ENCODE measurements at regions of chr10 and their contacts with region 1.

Region 1: GRCh38 chr10:92689663-92690210 is at the start of gene HHEX:
- DNase-seq: peak; percentile 88
- ATAC-seq: peak; percentile 76
- H3K4me3 ChIP-seq: peak within 1 kb of the TSS; percentile 82 to 95 (median 87)
- H3K4me3 Mint-ChIP-seq: peak within 1 kb of the TSS; percentile 96
- H3K27ac ChIP-seq: peak within 1 kb of the TSS; percentile 89 to 90
- H3K27ac Mint-ChIP-seq: peak within 1 kb of the TSS; percentile 98
- H3K4me1 ChIP-seq: peaks cover 28% of the 10 kb centered on the region in 2 donors
- H3K4me1 Mint-ChIP-seq: peaks cover 52% of the 10 kb centered on the region
- H3K27me3 ChIP-seq: no peaks in the 10 kb centered on the region
- H3K27me3 Mint-ChIP-seq: no peaks in the 10 kb centered on the region
- CTCF ChIP-seq: no peak
- total RNA-seq, gene HHEX: 149 and 155 TPM in 2 replicates

Region 2: DNA sequence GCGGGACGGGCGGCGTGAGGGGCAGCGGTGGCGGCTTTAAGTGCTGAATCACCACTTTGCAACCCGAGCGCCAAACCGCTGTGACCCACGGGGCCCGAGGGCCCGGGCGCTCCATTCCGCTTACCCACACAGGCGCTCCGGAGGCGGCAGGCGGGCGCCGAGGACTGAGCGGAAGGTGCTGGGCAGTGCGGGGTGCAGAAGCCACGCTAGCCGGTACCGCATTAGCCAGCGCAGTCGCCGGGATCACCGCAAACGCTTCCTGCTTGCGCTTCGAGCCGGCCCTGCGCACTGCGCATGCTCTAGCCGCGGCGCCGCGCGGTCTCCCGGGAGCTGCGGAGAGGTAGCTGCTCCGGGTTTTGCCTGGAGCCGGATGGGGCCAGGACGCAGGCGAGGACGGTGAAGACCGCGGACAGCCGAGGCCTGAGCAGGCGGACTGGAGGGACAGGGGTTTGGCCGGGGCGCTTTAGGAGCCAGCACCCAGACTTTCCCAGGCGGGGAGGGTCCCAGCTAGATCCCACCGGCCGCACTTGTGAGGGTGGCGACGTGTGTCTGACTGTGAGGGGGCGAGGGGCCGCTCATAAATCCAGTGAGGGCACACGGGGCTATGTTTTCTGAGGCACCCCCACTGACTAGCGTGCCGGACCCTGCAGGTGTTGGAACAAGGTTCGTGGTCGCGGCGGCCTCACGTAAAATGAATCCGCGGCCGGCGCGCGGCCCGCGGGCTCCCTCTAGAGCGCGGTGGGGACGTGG is 115.8 kb before region 1 on chr10 and contains the start of gene IDE:
- CTCF ChIA-PET with region 1: interaction called, 3 read pairs
- POLR2A ChIA-PET with region 1: interaction called, 6 read pairs
- intact Hi-C with region 1: loop called (anchors 1 kb)
- DNase-seq: peak; percentile 89
- ATAC-seq: peak; percentile 80
- H3K4me3 ChIP-seq: peak within 1 kb of the TSS; percentile 50 to 94 (median 90)
- H3K4me3 Mint-ChIP-seq: peak within 1 kb of the TSS; percentile 91
- H3K27ac ChIP-seq: peak within 1 kb of the TSS; percentile 70 to 80
- H3K27ac Mint-ChIP-seq: peak within 1 kb of the TSS; percentile 87
- H3K4me1 ChIP-seq: peaks cover 16 to 20% of the 10 kb centered on the region in 2 donors
- H3K4me1 Mint-ChIP-seq: peaks cover 35% of the 10 kb centered on the region
- H3K27me3 ChIP-seq: no peaks in the 10 kb centered on the region
- H3K27me3 Mint-ChIP-seq: no peaks in the 10 kb centered on the region
- CTCF ChIP-seq: peak; percentile 86
- total RNA-seq, gene IDE: 38.5 and 40.9 TPM in 2 replicates

Region 3: GRCh38 chr10:92699518-92700381 is 10.0 kb after region 1 on chr10:
- CTCF ChIA-PET with region 1: interaction called, 18 read pairs
- POLR2A ChIA-PET with region 1: interaction called, 44 read pairs
- intact Hi-C with region 1: loop called (anchors 1 kb)
- DNase-seq: peak; percentile 60
- ATAC-seq: peak; percentile 71
- H3K4me3 ChIP-seq: peak overlapping the region; percentile 49 to 76 (median 62)
- H3K4me3 Mint-ChIP-seq: peak overlapping the region; percentile 82
- H3K27ac ChIP-seq: peak overlapping the region; percentile 45 to 83
- H3K27ac Mint-ChIP-seq: peak overlapping the region; percentile 84
- H3K4me1 ChIP-seq: peaks cover 47 to 58% of the 10 kb centered on the region in 2 donors
- H3K4me1 Mint-ChIP-seq: peaks cover 59% of the 10 kb centered on the region
- H3K27me3 ChIP-seq: no peaks in the 10 kb centered on the region
- H3K27me3 Mint-ChIP-seq: no peaks in the 10 kb centered on the region
- CTCF ChIP-seq: no peak

Region 4: GRCh38 chr10:92742331-92743228 is 52.8 kb after region 1 on chr10:
- CTCF ChIA-PET with region 1: interaction called, 7 read pairs
- POLR2A ChIA-PET with region 1: interaction called, 52 read pairs
- intact Hi-C with region 1: loop called (anchors 1 kb)
- DNase-seq: peak; percentile 89
- ATAC-seq: peak; percentile 93
- H3K4me3 ChIP-seq: peak overlapping the region in 3 of 5 experiments; percentile 25 to 37 (median 30)
- H3K4me3 Mint-ChIP-seq: peak overlapping the region; percentile 68
- H3K27ac ChIP-seq: peak overlapping the region; percentile 87 to 91
- H3K27ac Mint-ChIP-seq: peak overlapping the region; percentile 91
- H3K4me1 ChIP-seq: peaks cover 60 to 66% of the 10 kb centered on the region in 2 donors
- H3K4me1 Mint-ChIP-seq: peaks cover 70% of the 10 kb centered on the region
- H3K27me3 ChIP-seq: no peaks in the 10 kb centered on the region
- H3K27me3 Mint-ChIP-seq: no peaks in the 10 kb centered on the region
- CTCF ChIP-seq: no peak

Region 5: DNA sequence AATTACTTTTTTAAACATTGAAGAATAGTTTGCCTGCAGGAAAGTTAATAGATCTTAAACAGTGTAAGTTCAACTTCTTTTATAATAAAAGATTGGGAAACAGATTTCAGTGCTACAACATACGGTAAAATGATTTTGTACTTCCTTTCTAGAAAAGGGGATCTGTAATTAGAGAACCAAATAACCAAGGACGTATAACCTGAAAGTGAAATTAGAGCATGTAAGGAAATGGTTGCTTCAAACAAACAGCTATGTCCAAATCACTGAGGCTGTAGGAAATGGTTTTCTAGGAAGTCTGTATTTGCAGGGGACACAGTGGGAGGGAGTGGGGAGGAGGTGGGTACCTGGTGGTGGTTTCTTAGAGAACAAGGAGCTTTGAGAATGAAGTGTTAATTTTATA is 100.7 kb after region 1 on chr10:
- CTCF ChIA-PET with region 1: interaction called, 32 read pairs
- POLR2A ChIA-PET with region 1: interaction called, 11 read pairs
- intact Hi-C with region 1: no loop called
- DNase-seq: peak; percentile 69
- ATAC-seq: peak; percentile 63
- H3K4me3 ChIP-seq: peak overlapping the region in 1 of 5 experiments; percentile 23
- H3K4me3 Mint-ChIP-seq: peak overlapping the region; percentile 57
- H3K27ac ChIP-seq: peak overlapping the region; percentile 70 to 82
- H3K27ac Mint-ChIP-seq: peak overlapping the region; percentile 92
- H3K4me1 ChIP-seq: peaks cover 44 to 47% of the 10 kb centered on the region in 2 donors
- H3K4me1 Mint-ChIP-seq: peaks cover 40% of the 10 kb centered on the region
- H3K27me3 ChIP-seq: no peaks in the 10 kb centered on the region
- H3K27me3 Mint-ChIP-seq: no peaks in the 10 kb centered on the region
- CTCF ChIP-seq: no peak

Region 6: GRCh38 chr10:93496322-93497041 is 806.7 kb after region 1 on chr10 and contains the start of gene CEP55:
- CTCF ChIA-PET with region 1: no interaction called
- POLR2A ChIA-PET with region 1: no interaction called
- intact Hi-C with region 1: loop called (anchors 2 kb)
- DNase-seq: peak; percentile 94
- ATAC-seq: peak; percentile 99
- H3K4me3 ChIP-seq: peak within 1 kb of the TSS; percentile 67 to 97 (median 81)
- H3K4me3 Mint-ChIP-seq: peak within 1 kb of the TSS; percentile 93
- H3K27ac ChIP-seq: peak within 1 kb of the TSS in 1 of 2 donors; percentile 44
- H3K27ac Mint-ChIP-seq: peak within 1 kb of the TSS; percentile 67
- H3K4me1 ChIP-seq: peaks cover 8 to 16% of the 10 kb centered on the region in 2 donors
- H3K4me1 Mint-ChIP-seq: peaks cover 15% of the 10 kb centered on the region
- H3K27me3 ChIP-seq: peaks cover 0 to 4% (median 1%) of the 10 kb centered on the region in 4 experiments
- H3K27me3 Mint-ChIP-seq: peaks cover 8% of the 10 kb centered on the region
- CTCF ChIP-seq: no peak
- total RNA-seq, gene CEP55: 0.19 and 0.27 TPM in 2 replicates